ENCODE measurements at regions of chr9 and their contacts with region 1.

Region 1: GRCh38 chr9:25562111-25562510 is 116.1 kb downstream of the TUSC1 start:
- DNase-seq: no peak
- ATAC-seq: no peak

Region 2: GRCh38 chr9:25505644-25506043 is 56.5 kb before region 1 on chr9:
- intact Hi-C with region 1: loop called (anchors 10 kb)
- DNase-seq: no peak
- ATAC-seq: no peak

Measured in Right ventricle myocardium superior (tissue), 1 donor.